ENCODE measurements at regions of chr20 and their contacts with region 1.

Region 1: DNA sequence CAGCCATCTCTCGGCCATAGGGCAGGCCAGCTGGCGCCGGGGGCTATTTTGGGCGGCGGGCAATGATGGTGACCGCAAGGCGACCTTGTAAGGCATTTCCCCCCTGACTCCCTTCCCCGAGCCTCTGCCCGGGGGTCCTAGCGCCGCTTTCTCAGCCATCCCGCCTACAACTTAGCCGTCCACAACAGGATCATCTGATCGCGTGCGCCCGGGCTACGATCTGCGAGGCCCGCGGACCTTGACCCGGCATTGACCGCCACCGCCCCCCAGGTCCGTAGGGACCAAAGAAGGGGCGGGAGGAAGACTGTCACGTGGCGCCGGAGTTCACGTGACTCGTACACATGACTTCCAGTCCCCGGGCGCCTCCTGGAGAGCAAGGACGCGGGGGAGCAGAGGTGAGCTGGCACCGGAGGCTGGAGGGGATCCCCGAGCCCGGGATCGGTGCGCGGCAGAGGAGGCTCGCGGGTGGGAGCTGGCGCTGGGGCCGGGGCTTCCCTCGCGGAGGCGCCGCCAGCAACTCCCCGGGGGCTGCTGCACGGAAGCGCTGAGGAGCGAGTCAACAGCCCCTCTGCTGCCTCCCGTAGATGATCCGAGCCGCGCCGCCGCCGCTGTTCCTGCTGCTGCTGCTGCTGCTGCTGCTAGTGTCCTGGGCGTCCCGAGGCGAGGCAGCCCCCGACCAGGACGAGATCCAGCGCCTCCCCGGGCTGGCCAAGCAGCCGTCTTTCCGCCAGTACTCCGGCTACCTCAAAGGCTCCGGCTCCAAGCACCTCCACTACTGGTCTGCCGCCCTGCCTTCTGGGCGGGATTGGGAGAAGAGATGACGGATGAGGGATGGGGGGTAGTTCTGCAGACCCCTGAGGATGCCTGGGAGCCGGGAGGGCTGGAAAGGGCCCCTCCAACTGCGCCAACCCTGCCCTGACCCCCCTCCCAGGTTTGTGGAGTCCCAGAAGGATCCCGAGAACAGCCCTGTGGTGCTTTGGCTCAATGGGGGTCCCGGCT is at the starts of genes CTSA and NEURL2:
- DNase-seq: peak; percentile 94 to 97
- ATAC-seq: peak; percentile 88 to 94 (median 90)
- H3K4me3 ChIP-seq: peak within 1 kb of the TSS; percentile 91
- H3K27ac ChIP-seq: peak within 1 kb of the TSS; percentile 92
- H3K4me1 ChIP-seq: peaks cover 24% of the 10 kb centered on the region
- H3K27me3 ChIP-seq: no peaks in the 10 kb centered on the region
- CTCF ChIP-seq: no peak
- total RNA-seq, gene CTSA: 43.0 to 55.4 (median 47.3) TPM
- total RNA-seq, gene NEURL2: 5.3 to 11.8 (median 8.2) TPM

Region 2: DNA sequence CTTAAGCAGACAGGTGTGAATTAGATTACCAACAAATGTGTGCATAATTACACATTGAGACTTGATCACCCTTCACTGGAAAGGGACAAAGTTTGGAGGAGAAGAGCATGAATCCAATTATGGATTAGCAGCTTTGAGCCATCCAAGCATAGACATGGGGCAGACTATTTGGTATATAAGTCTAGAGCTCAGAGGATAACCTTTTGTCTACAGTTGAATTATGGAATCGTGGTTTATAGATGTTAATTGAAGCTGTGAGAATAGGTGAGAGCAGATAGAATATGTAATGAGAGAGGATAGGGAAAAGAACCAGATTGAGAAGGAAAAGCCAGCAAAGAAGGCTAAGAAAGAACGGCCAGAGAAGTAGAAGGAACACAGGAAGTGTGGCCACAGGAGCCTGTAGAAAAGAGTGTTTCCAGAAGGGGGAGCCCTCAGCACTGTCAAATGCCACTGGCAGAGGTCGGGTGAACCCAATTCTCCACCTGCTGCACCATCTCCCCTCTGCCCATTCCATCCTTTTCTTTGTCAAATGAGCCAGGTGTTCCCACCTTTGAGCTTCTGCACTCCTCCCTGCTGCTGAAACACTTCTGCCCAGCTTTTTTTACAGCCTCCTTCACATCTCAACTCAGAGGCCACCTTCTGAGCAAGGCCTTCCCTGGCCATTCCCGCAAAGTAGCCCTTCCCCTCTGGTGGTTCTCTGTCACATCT is 92.2 kb before region 1 on chr20:
- intact Hi-C with region 1: loop called in 1 of 2 experiments (anchors 5 kb)
- DNase-seq: peak in 1 of 2 donors; percentile 44
- ATAC-seq: peak; percentile 55 to 67 (median 62)
- H3K4me3 ChIP-seq: no peak overlapping the region
- H3K27ac ChIP-seq: peak overlapping the region; percentile 80
- H3K4me1 ChIP-seq: peaks cover 32% of the 10 kb centered on the region
- H3K27me3 ChIP-seq: no peaks in the 10 kb centered on the region
- CTCF ChIP-seq: peak; percentile 74

Region 3: DNA sequence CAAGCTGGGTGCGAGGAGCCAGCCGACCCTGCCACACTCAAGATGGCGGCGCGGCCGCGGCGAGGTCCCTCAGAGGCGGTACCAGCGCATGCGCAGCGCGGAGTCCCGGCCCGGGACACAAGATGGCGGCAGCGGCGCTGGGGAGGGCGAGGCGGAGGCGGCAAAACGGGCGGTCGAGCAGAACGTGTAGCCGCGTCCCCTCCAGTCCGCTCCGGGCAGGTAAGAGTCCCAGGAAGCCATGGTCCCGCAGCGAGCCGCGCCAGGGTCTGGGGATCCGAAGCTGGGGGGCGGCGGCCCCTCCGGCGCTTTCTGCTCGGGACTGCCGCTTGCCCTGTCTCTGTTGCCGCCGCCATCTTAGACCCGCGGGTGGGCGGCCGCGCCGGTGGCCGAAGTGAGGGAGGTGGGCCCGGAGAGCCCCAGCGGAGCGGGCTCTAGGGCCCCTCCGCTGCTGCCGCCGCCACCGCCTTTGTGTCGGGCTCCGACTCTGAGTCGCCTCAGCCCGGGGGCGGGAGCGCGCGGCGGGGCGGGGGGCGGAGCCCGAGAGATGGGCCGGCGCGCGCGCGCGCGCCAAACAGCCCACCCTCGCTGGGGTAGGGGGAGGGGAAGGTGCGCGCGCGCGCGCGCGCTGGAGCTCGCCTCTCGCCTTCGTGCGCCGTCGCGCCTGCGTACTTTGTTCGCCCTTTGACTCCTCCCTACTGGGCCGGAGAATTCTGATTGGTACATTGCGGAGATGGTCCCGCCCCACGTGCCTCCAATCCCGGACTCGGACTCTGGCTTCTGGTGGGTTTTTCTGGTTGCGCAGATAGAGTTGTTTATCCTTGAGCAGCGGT is 43.5 kb after region 1 on chr20 and contains the start of gene PCIF1:
- intact Hi-C with region 1: loop called (anchors 5 kb)
- DNase-seq: peak; percentile 98 to 99
- ATAC-seq: peak; percentile 86 to 92 (median 88)
- H3K4me3 ChIP-seq: peak within 1 kb of the TSS; percentile 97
- H3K27ac ChIP-seq: peak within 1 kb of the TSS; percentile 100
- H3K4me1 ChIP-seq: peaks cover 18% of the 10 kb centered on the region
- H3K27me3 ChIP-seq: no peaks in the 10 kb centered on the region
- CTCF ChIP-seq: no peak
- total RNA-seq, gene PCIF1: 24.7 to 46.7 (median 32.0) TPM

Region 4: DNA sequence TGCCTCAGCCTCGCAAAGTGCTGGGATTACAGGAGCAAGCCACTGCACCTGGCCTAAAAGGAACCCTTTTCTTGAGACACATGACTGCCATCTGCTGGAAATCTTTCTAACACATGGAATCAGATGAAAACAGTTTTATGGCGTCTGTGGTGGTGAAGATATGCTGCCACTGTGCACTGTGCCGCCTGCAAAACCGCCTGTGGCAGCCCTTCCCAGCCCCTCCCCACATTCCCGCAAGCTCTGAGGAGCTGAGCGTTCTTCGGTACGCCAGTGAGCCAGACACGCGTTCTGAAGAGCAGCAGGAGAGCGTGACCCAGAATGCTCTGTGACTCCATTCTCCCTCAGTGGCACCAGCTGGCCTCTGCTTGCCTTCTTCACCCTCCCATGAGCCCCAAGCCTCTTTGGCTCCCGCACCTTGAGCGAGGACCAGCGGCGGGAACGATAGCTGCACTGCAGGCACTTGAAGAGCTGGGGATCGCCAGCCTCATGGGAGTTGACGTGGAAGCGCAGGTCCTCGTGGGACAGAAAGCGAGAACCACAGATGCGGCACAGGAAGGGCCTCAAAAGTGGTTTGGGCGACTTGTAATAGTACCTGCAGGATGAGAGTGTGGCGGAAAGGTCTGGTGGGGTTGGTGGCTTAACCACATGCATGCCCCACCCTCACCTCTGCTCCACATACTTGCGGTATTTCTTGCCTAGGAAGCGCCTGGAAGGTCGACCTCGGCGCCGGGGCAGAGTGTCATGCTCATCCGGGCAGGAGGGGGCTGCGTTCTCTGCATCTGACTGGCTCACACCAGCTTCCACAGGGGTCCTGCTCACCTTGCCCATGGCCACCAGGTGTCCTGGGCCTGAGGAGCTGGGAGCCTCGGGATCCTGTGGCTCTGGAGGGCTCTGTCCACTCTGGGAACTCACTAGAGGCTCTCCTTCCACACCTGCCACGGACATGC is 72.0 kb after region 1 on chr20:
- intact Hi-C with region 1: loop called (anchors 5 kb)
- DNase-seq: peak in 1 of 2 donors; percentile 48
- ATAC-seq: peak in 3 of 4 donors; percentile 47 to 66 (median 48)
- H3K4me3 ChIP-seq: no peak overlapping the region
- H3K27ac ChIP-seq: no peak overlapping the region
- H3K4me1 ChIP-seq: peaks cover under 1% of the 10 kb centered on the region
- H3K27me3 ChIP-seq: no peaks in the 10 kb centered on the region
- CTCF ChIP-seq: peak; percentile 44

Region 5: GRCh38 chr20:45971675-45972499 is 80.6 kb after region 1 on chr20 and contains the start of gene ZNF335:
- intact Hi-C with region 1: loop called in 1 of 2 experiments (anchors 5 kb)
- DNase-seq: peak; percentile 97 to 99
- ATAC-seq: peak; percentile 90 to 92 (median 92)
- H3K4me3 ChIP-seq: peak within 1 kb of the TSS; percentile 93
- H3K27ac ChIP-seq: peak within 1 kb of the TSS; percentile 97
- H3K4me1 ChIP-seq: peaks cover 27% of the 10 kb centered on the region
- H3K27me3 ChIP-seq: no peaks in the 10 kb centered on the region
- CTCF ChIP-seq: peak; percentile 49
- total RNA-seq, gene ZNF335: 10.2 to 11.5 (median 10.9) TPM